Activated CD8-positive, alpha-beta T cell treated with anti-CD3 and anti-CD28 coated beads for 36 hours (primary cell): ENCODE measurements at regions of chr3 and their contacts with region 1.

Region 1: GRCh38 chr3:70550723-70551319 is 238.4 kb upstream of the MDFIC2 start:
- DNase-seq: peak; percentile 85
- ATAC-seq: peak; percentile 86
- H3K4me3 Mint-ChIP-seq: no peak overlapping the region
- H3K27ac Mint-ChIP-seq: no peak overlapping the region
- H3K4me1 Mint-ChIP-seq: no peaks in the 10 kb centered on the region
- H3K27me3 Mint-ChIP-seq: peaks cover 1% of the 10 kb centered on the region
- CTCF ChIP-seq: peak; percentile 72

Region 2: GRCh38 chr3:70352215-70352614 is 198.6 kb before region 1 on chr3:
- CTCF ChIA-PET with region 1: no interaction called
- POLR2A ChIA-PET with region 1: no interaction called
- intact Hi-C with region 1: no loop called
- DNase-seq: no peak
- ATAC-seq: no peak
- H3K4me3 Mint-ChIP-seq: no peak overlapping the region
- H3K27ac Mint-ChIP-seq: no peak overlapping the region
- H3K4me1 Mint-ChIP-seq: no peaks in the 10 kb centered on the region
- H3K27me3 Mint-ChIP-seq: peaks cover 2% of the 10 kb centered on the region
- CTCF ChIP-seq: no peak

Region 3: GRCh38 chr3:70531063-70531657 is 19.7 kb before region 1 on chr3:
- CTCF ChIA-PET with region 1: interaction called, 12 read pairs
- POLR2A ChIA-PET with region 1: no interaction called
- intact Hi-C with region 1: no loop called
- DNase-seq: no peak
- ATAC-seq: no peak
- H3K4me3 Mint-ChIP-seq: no peak overlapping the region
- H3K27ac Mint-ChIP-seq: no peak overlapping the region
- H3K4me1 Mint-ChIP-seq: no peaks in the 10 kb centered on the region
- H3K27me3 Mint-ChIP-seq: peaks cover 3% of the 10 kb centered on the region
- CTCF ChIP-seq: peak; percentile 62

Region 4: DNA sequence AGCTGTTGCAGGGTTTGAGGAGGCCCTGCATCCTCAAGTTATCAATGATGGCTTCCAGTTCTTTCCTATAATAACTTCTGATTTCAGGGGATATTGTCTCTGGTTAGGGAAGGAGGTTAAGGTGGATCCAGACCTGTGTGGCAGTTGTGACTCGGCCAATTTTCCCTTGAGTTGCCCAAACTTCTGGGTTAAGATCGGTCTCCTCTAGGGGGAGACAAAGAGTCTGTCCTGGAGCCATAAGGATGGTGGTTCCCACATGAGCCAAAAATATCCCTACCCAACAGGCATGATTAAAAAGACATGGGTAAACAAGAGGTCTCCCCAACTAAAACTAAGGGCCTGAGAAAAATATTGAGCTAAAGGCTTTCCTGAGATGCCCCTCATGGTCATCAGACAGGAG is 10.9 kb before region 1 on chr3:
- CTCF ChIA-PET with region 1: interaction called, 21 read pairs
- POLR2A ChIA-PET with region 1: no interaction called
- intact Hi-C with region 1: no loop called
- DNase-seq: no peak
- ATAC-seq: no peak
- H3K4me3 Mint-ChIP-seq: no peak overlapping the region
- H3K27ac Mint-ChIP-seq: no peak overlapping the region
- H3K4me1 Mint-ChIP-seq: no peaks in the 10 kb centered on the region
- H3K27me3 Mint-ChIP-seq: peaks cover 10% of the 10 kb centered on the region
- CTCF ChIP-seq: no peak

Region 5: DNA sequence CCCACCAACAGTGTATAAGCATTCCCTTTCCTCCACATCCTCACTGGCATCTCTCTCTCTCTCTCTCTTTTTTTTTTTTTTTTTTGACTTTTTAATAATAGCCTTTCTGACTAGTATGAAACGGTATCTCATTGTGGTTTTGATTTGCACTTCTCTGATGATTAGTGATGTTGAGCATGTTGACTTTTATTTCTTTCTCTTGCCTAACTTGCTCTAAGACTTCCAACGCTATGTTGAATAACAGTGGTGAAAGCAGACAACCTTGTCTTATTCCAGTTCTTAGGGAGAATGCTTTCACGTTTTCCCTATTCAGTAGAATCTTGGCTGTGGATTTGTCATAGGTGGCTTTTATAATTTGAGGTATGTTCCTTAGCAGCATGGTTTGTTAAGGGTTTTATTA is 11.0 kb after region 1 on chr3:
- CTCF ChIA-PET with region 1: interaction called, 12 read pairs
- POLR2A ChIA-PET with region 1: no interaction called
- intact Hi-C with region 1: no loop called
- DNase-seq: no peak
- ATAC-seq: no peak
- H3K4me3 Mint-ChIP-seq: no peak overlapping the region
- H3K27ac Mint-ChIP-seq: no peak overlapping the region
- H3K4me1 Mint-ChIP-seq: peaks cover 3% of the 10 kb centered on the region
- H3K27me3 Mint-ChIP-seq: peaks cover 4% of the 10 kb centered on the region
- CTCF ChIP-seq: no peak

Region 6: DNA sequence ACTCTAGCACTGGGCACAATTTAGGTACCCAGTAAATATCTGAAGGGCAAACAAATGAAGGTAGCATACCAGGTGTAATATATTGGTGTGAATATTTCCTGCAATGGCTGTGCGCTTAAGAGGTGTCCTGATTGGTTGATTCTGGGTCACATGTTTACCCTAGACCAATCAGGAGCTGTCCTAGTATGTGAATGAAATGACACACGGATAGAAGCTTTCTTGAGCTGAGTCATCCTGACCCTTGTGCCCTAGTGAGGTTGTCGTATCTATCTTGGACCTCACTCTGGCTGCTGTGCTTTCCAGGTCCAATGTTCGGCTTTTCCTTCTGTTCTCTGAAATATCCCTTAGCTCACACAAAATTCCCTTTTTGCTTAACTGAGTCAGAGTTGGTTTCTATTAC is 1090.9 kb after region 1 on chr3:
- CTCF ChIA-PET with region 1: no interaction called
- POLR2A ChIA-PET with region 1: no interaction called
- intact Hi-C with region 1: loop called (anchors 10 kb)
- DNase-seq: peak; percentile 25
- ATAC-seq: peak; percentile 80
- H3K4me3 Mint-ChIP-seq: no peak overlapping the region
- H3K27ac Mint-ChIP-seq: no peak overlapping the region
- H3K4me1 Mint-ChIP-seq: no peaks in the 10 kb centered on the region
- H3K27me3 Mint-ChIP-seq: no peaks in the 10 kb centered on the region
- CTCF ChIP-seq: no peak